ENCODE measurements at regions of chr16 and their contacts with region 1.

Region 1: DNA sequence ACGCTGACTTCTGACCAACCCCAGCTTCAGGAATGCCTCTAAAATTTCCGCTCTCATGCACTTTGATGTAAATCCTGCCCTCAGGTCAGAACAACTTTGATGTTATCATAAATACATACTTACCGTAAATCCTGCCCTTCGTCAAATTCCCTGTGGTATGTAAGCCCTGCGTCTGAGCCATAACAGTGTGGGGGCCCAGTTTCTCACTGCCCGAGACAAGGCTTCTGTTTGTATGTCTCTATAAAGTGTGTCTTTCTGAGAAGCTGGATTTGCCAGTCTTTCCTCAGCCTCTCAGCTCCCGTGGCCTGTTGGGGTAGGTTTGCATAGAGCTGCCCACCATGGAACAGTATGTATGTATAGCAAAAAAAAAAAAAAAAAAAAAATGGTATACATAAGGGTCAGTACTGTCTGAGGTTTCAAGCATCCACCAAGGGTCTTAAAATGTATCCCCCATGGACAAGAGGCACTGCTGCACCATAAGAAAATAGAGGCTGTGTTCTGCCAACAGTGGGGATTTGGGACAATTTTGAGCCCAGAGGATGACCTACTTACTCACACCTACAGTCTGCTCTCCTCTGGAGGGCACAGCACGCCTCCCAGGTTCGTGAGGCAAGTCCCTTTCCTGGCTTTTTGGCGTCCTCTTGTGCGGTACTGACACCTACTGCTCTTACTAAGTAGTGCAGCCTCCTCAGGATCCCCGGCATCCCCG is 17.5 kb downstream of the PRMT7 start:
- DNase-seq: peak; percentile 38
- H3K4me3 ChIP-seq: no peak overlapping the region
- CTCF ChIP-seq: peak; percentile 85

Region 2: DNA sequence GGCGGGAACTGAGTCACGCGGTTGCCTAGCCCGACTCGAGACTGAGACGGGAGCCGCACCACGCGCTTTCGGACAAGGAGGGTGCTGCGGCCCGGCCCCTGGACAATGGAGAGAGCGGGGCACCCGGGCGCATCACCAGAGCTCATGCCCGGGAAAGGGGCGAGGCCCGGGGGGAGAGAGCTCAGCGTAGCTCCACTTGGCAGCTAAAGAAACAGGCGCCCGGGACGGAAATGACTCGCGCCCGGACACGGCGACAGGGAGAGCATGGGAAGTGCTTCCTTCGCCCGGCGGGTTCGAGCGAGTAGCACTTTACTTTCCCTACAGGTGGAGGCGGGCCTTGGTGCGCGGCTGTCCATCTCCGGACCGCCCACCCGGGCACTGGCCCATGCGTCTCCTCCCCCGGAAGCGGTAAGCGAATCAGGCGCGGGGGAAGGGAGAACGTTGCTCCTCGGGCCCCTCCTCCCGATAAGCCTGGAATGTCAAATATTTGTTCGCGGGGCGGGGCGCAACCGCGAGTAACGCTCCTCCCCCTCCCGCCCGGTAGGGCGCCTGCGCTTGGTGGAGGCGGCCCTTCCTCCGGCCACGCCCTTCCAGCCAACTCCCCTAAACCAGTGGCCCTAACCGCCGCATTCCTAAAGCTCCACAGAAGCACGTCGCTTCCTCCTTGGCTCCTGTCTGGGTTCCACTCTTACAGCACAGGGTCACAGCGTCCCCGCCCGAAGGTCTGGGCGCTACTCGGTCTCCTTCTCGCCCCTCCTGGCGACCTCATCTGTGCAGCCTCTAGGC is 90.9 kb before region 1 on chr16:
- CTCF ChIA-PET with region 1: interaction called, 67 read pairs
- POLR2A ChIA-PET with region 1: no interaction called
- DNase-seq: peak; percentile 80
- H3K4me3 ChIP-seq: peak overlapping the region; percentile 62
- CTCF ChIP-seq: no peak

Region 3: DNA sequence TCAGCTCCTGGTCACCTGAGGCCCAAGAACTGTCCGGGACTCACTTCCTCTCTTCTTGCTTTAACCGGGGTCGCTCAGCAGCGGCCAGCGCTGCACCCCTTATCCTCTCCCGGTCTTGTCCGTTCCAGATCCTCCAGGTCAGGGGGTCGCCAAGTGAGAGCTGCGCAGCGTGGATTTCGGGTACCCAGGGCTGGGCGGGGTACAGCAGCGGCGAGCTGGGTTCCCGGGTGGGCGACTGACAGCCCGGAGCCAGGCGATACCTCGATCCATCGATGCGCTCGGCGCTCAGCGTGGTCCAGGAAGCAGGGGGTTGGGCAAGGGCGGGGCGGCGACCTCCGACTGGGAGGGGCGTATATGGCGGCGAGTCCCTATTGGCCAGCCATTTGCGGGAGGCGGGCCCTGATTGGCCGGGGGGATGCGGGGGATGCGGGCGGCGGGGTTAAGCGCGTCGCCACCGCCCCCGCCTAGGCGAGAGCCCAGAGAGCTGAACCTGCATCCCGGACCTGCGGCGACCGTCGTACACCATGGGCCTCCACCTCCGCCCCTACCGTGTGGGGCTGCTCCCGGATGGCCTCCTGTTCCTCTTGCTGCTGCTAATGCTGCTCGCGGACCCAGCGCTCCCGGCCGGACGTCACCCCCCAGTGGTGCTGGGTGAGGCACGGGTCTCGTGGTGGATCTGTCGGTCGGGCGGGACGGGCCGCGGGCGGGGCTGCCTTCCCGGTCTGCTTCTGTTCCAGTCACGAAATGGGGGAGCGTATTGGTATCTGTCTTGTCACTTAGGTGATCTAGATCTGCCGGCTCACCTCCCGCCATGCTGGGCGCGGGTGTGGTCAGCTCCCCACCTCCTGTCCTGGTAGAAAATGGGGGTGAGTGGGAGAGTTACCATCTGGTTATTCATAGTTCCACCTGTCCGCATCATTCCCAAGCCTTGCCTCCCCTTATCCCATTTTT is 83.1 kb before region 1 on chr16 and contains the start of gene PLA2G15:
- CTCF ChIA-PET with region 1: interaction called, 67 read pairs
- POLR2A ChIA-PET with region 1: no interaction called
- DNase-seq: peak; percentile 73
- H3K4me3 ChIP-seq: peak within 1 kb of the TSS; percentile 99
- CTCF ChIP-seq: no peak

Region 4: DNA sequence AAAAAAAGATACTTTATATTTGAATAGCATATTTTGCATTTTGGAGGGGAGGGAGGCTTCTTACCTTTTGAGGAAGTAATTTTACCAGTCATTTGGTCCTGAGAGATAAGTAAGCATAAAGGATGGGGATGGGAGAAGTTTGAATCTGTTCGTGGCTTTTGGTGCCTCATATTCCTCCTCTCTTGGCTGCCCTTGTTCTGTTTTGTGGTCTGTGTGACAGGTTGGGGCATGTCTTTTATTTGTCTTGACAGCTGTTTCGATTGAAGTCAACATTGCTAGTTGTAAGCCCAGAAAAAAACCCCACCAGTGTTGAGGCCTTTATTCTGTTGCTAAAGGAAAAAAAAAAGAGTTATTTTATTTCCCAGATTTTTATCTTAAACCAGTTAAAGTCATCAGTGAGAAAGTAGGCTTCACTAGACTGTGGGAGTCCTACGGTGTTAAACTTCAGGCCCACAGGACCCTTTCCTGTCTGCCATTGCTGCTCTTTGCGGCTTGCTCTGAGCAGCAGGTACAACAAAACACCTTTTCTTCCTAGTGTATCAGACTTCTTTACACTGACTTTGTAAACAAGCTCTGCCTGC is 52.6 kb before region 1 on chr16:
- CTCF ChIA-PET with region 1: interaction called, 19 read pairs
- POLR2A ChIA-PET with region 1: no interaction called
- DNase-seq: no peak
- H3K4me3 ChIP-seq: no peak overlapping the region
- CTCF ChIP-seq: no peak

Region 5: DNA sequence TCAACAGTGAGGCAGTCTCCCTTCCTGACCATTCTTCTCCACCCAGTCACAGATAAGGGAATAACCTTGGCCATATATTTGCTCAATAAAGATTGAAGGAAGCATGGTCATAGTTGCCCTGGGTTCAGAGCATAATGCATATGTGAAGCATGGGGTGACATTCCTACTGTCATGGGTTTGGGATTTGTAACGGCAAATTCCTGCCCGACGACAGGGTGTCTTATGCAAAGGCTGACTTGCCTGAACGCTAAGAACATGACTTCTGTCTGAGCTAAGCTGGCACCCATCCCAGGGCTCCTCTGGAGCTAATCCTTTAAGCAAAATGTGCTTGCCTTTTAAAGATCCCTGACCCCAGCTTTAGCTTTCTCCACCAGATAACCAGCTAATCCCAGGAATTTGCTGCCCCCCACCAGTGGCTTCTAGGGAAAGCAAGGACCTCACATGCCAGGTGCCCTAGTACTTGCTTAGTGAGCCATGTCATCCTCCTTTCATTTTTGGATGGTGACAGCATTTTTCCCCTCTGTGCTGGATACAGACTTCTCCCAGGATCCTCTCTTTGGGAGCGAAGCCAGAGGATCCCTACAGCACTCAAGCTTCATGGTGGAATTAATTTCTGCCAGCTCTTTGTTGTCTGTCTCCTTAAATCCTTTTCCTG is 29.3 kb before region 1 on chr16:
- CTCF ChIA-PET with region 1: interaction called, 15 read pairs
- POLR2A ChIA-PET with region 1: no interaction called
- DNase-seq: peak; percentile 46
- H3K4me3 ChIP-seq: no peak overlapping the region
- CTCF ChIP-seq: no peak

Region 6: GRCh38 chr16:68310761-68311511 is 17.4 kb before region 1 on chr16 and contains the starts of genes PRMT7 and SLC7A6OS:
- CTCF ChIA-PET with region 1: interaction called, 32 read pairs
- POLR2A ChIA-PET with region 1: interaction called, 4 read pairs
- DNase-seq: no peak
- H3K4me3 ChIP-seq: peak within 1 kb of the TSS; percentile 96
- CTCF ChIP-seq: no peak

Region 7: DNA sequence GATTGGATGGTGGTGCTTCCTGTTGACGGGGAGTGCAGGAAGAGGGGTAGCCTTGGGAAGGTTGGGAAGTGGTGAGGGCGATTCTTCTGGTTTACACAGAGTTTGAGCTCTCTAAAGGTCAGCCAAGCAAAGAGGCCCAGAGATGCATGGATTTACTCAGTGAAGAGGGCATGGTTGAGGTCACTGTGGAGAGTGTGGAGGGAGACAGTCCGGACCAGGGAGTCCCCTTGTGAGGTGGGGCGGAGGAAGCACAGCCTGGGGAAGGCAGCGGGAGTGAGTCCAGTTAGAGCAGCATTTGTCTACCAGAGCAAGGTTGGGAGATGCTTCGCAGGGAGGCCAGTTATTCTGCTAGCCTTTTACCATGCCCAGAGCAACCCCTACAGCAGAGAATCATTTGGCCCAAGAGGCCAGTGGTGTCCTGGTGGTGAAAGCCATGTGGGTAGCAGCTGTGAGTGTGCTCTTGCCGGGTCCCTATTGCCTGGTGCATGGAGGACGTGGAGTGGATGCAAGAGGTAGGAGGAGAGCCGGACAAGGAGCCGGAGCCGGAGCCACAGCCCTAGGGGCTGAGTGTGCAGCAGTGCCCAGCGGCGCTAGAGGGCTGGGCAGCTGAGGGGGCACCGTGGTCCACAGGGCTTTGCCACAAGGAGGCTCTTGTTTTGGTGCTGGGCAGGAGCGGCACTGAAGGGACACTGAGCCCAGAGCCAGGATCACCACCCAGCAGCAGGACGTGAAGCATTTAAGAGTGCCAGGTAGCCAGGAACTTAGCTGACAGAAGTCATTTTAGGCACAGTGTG is 10.2 kb after region 1 on chr16:
- CTCF ChIA-PET with region 1: interaction called, 17 read pairs
- POLR2A ChIA-PET with region 1: no interaction called
- DNase-seq: no peak
- H3K4me3 ChIP-seq: no peak overlapping the region
- CTCF ChIP-seq: no peak

Region 8: GRCh38 chr16:68473358-68474070 is 145.2 kb after region 1 on chr16:
- CTCF ChIA-PET with region 1: no interaction called
- POLR2A ChIA-PET with region 1: no interaction called
- DNase-seq: no peak
- H3K4me3 ChIP-seq: no peak overlapping the region
- CTCF ChIP-seq: no peak